Cardiac septum (tissue), 1 donor: ENCODE measurements at regions of chr9 and their contacts with region 1.

Region 1: GRCh38 chr9:96344458-96345180 is 38.9 kb downstream of the SLC35D2 start:
- DNase-seq: no peak

Region 2: DNA sequence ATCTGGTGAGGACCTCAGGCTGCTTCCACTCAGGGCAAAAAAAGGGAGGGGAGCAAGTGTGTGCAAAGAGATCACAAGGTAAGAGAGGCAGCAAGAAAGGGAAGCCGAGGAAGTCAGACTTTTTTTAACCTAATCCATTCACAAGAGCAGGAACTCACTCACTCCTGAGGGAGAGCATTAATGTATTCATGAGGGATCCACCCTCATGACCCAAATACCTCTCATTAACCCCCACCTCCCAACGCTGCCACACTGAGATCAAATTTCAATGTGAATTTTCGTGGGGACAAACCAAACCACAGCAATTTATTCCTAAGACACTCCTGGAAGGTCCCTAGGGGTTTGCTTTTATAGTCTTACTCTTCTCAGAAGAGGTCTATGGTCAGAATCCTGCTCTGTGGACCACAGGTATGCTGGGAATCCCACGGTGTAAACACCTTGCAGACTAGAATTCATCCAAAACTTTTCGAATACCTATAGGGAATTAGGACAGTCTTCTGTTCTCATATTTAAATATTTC is 151.3 kb before region 1 on chr9:
- intact Hi-C with region 1: no loop called
- DNase-seq: peak; percentile 3

Region 3: GRCh38 chr9:96383165-96383942 is 38.7 kb after region 1 on chr9 and contains the start of gene SLC35D2:
- intact Hi-C with region 1: loop called (anchors 5 kb)
- DNase-seq: peak; percentile 80
- total RNA-seq, gene SLC35D2: 12.9 TPM

Region 4: DNA sequence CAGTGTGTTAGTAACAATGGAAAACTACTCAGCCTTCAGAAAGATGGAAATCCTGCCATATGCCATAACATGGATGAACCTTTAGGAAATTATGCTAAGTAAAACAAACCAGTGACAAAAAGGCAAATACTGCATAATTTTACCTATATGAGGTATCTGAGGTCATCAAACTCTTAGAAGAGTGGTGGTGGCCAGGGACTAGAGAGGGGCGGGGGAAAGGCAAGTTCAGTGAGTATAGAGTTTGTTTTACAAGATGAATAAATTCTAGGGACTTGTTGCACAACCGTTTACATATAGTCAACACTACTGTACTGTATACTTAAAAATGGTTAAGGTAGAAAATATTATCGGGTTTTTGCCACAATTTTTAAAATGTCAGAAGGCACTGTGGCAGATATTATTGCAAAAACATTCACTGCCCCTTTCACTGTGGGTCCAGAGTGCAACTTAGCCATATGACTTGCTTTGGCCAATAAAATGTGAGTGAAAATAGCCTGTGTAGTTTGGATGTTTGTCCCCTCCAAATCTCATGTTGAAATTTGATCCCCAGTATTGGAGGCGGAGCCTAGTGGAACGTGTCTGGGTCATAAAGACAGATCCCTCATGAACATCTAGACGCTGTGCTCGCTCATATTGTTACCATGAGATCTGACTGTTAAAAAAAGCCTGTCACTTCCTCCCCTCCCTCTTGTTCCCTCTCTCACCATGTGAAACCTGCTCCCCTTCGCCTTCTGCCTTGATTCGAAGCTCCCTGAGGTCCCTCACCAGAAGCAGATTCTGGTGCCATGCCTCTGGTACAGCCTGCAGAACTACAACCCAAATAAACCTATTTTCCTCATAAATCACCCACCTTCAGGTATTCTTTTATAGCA is 64.0 kb after region 1 on chr9:
- intact Hi-C with region 1: no loop called
- DNase-seq: no peak